ENCODE measurements at regions of chr20 and their contacts with region 1.

Region 1: GRCh38 chr20:62953839-62954703 is 1.6 kb downstream of the SLC17A9 start:
- DNase-seq: peak; percentile 59 to 92 (median 80)
- ATAC-seq: peak; percentile 89 to 90
- H3K4me3 Mint-ChIP-seq: peak overlapping the region; percentile 76 to 92 (median 88)
- H3K27ac Mint-ChIP-seq: peak overlapping the region; percentile 88 to 97 (median 95)
- H3K4me1 Mint-ChIP-seq: peaks cover 13 to 67% (median 38%) of the 10 kb centered on the region in 4 donors
- H3K27me3 Mint-ChIP-seq: no peaks in the 10 kb centered on the region

Region 2: DNA sequence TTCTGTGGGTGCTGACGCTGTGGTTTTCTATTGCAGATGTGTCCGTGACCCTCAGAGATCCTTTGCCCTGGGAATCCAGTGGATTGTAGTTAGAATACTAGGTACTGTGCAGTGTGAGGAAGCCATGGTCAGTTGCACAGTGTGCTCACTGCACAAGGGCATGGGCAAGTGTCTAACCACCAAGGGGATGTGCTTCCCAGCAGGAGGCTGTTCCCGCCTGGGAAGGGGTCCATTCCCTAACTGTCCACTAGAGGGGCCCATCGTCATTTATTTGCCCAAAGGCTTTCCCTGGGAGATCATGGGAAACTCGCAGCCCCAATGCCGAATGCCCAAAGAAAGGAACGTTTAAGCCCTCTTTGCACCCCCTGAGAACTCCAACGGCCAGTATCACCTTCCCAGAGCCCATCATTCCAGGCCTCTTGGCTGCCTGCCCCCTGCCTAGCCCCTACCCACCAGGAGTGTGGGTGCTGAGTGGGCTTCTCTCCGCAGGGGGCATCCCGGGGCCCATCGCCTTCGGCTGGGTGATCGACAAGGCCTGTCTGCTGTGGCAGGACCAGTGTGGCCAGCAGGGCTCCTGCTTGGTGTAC is 285.5 kb before region 1 on chr20:
- POLR2A ChIA-PET with region 1: no interaction called
- DNase-seq: peak in 5 of 10 donors; percentile 16 to 49 (median 33)
- ATAC-seq: peak in 1 of 2 donors; percentile 53
- H3K4me3 Mint-ChIP-seq: no peak overlapping the region
- H3K27ac Mint-ChIP-seq: peak overlapping the region in 1 of 10 donors; percentile 53
- H3K4me1 Mint-ChIP-seq: peaks cover 0 to 2% (median 0%) of the 10 kb centered on the region in 4 donors
- H3K27me3 Mint-ChIP-seq: no peaks in the 10 kb centered on the region

Region 3: DNA sequence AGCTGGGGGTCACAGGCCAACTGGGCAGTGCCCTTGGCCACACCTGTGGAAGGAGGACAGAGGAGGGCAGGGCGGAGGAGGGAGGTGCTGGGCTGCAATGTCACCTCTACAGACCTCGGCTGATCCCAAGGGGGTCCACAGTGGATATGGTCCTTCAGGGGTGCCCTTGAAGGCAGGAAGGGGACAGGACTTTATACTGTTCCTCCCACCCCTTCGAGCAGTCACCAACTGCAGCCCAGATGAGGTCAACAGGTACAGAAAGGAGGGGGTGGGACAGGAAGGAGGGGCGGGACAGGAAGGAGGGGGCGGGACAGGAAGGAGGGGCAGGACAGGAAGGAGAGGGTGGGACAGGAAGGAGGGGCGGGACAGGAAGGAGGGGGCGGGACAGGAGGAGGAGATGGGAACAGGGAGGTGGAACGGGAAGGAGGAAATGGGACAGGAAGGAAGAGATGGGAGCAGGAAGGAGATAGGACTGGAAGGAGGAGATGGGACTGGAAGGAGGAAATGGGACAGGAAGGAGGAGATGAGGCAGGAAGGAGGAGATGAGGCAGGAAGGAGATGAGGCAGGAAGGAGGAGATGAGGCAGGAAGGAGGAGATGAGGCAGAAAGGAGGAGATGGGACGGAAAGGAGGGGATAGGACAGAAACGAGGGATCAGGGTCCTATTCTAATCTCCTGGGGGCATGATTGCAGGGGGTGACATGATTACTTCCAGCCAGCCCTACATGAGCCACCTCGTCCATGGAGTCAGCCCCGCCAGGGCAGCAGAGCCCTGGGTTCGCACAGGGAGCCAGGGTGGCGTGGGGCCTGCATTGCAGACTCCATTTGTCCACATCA is 177.2 kb before region 1 on chr20:
- POLR2A ChIA-PET with region 1: no interaction called
- DNase-seq: peak in 9 of 10 donors; percentile 14 to 90 (median 55)
- ATAC-seq: peak; percentile 90 to 92
- H3K4me3 Mint-ChIP-seq: peak overlapping the region; percentile 50 to 85 (median 70)
- H3K27ac Mint-ChIP-seq: peak overlapping the region; percentile 86 to 96 (median 92)
- H3K4me1 Mint-ChIP-seq: peaks cover 23 to 63% (median 50%) of the 10 kb centered on the region in 4 donors
- H3K27me3 Mint-ChIP-seq: no peaks in the 10 kb centered on the region

Region 4: GRCh38 chr20:62900052-62900691 is 53.9 kb before region 1 on chr20:
- POLR2A ChIA-PET with region 1: interaction called, 16 read pairs
- DNase-seq: peak; percentile 63 to 87 (median 77)
- ATAC-seq: peak; percentile 88 to 93
- H3K4me3 Mint-ChIP-seq: peak overlapping the region in 9 of 10 donors; percentile 54 to 85 (median 76)
- H3K27ac Mint-ChIP-seq: peak overlapping the region; percentile 33 to 96 (median 91)
- H3K4me1 Mint-ChIP-seq: peaks cover 18 to 40% (median 34%) of the 10 kb centered on the region in 4 donors
- H3K27me3 Mint-ChIP-seq: no peaks in the 10 kb centered on the region

Region 5: GRCh38 chr20:62921119-62921687 is 32.9 kb before region 1 on chr20:
- POLR2A ChIA-PET with region 1: interaction called, 54 read pairs
- DNase-seq: peak; percentile 45 to 77 (median 60)
- ATAC-seq: peak; percentile 54 to 60
- H3K4me3 Mint-ChIP-seq: peak overlapping the region; percentile 80 to 92 (median 88)
- H3K27ac Mint-ChIP-seq: peak overlapping the region; percentile 82 to 96 (median 90)
- H3K4me1 Mint-ChIP-seq: peaks cover 47 to 88% (median 83%) of the 10 kb centered on the region in 4 donors
- H3K27me3 Mint-ChIP-seq: no peaks in the 10 kb centered on the region

Region 6: GRCh38 chr20:62943396-62943795 is 10.7 kb before region 1 on chr20:
- POLR2A ChIA-PET with region 1: interaction called, 90 read pairs
- DNase-seq: no peak
- ATAC-seq: no peak
- H3K4me3 Mint-ChIP-seq: no peak overlapping the region
- H3K27ac Mint-ChIP-seq: peak overlapping the region in 1 of 10 donors; percentile 18
- H3K4me1 Mint-ChIP-seq: peaks cover 27 to 49% (median 36%) of the 10 kb centered on the region in 4 donors
- H3K27me3 Mint-ChIP-seq: no peaks in the 10 kb centered on the region